Naive thymus-derived CD4-positive, alpha-beta T cell (primary cell): ENCODE measurements at regions of chr17 and their contacts with region 1.

Region 1: GRCh38 chr17:81911277-81911961 is at the start of gene PCYT2:
- DNase-seq: peak; percentile 84 to 95 (median 92)
- ATAC-seq: peak; percentile 97
- H3K4me3 ChIP-seq: peak within 1 kb of the TSS; percentile 70
- H3K4me3 Mint-ChIP-seq: peak within 1 kb of the TSS; percentile 72 to 92 (median 86)
- H3K27ac ChIP-seq: peak within 1 kb of the TSS; percentile 68
- H3K27ac Mint-ChIP-seq: peak within 1 kb of the TSS in 6 of 9 donors; percentile 33 to 85 (median 54)
- H3K4me1 ChIP-seq: peaks cover 8 to 12% of the 10 kb centered on the region in 2 donors
- H3K4me1 Mint-ChIP-seq: peaks cover 6 to 33% (median 16%) of the 10 kb centered on the region in 7 donors
- H3K27me3 ChIP-seq: no peaks in the 10 kb centered on the region
- H3K27me3 Mint-ChIP-seq: no peaks in the 10 kb centered on the region
- total RNA-seq, gene PCYT2: 17.5 to 43.6 (median 35.2) TPM

Region 2: DNA sequence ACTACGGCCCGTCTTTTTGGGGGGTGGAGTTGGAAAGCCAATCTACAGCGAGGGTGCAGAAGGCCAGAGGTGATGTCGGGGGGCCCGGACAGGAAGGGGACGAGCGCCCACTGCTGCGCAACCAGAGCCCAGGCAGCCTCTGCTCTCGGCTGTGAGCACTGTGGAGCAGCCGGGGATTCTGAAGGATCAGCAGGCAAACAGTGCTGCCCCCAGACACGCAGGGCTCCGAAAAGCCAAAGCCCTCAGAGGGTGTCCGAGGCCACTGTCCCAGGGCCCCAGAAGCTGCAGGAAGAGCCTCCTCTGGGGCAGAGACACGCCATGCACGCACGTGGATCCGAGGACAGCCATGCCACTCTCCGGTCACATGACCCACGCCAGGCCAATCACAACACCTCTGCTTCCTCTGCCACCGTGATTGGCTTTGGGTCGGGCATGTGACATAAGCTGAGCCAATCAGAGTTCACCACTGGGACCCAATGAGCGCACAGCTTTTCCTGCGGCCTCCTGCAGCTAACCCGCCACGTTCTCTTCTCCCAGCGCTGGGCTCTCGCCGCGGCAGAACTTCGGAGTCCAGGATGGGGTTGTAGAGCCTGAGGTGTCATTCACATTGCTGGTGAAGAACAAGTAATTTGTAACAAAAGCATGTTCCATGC is 439.5 kb before region 1 on chr17:
- CTCF ChIA-PET with region 1: no interaction called
- POLR2A ChIA-PET with region 1: no interaction called
- intact Hi-C with region 1: no loop called
- DNase-seq: peak in 2 of 9 donors; percentile 31 to 42
- ATAC-seq: no peak
- H3K4me3 ChIP-seq: no peak overlapping the region
- H3K4me3 Mint-ChIP-seq: no peak overlapping the region
- H3K27ac ChIP-seq: no peak overlapping the region
- H3K27ac Mint-ChIP-seq: no peak overlapping the region
- H3K4me1 ChIP-seq: no peaks in the 10 kb centered on the region
- H3K4me1 Mint-ChIP-seq: no peaks in the 10 kb centered on the region
- H3K27me3 ChIP-seq: no peaks in the 10 kb centered on the region
- H3K27me3 Mint-ChIP-seq: no peaks in the 10 kb centered on the region

Region 3: GRCh38 chr17:81852237-81852636 is 59.2 kb before region 1 on chr17:
- CTCF ChIA-PET with region 1: no interaction called
- POLR2A ChIA-PET with region 1: no interaction called
- intact Hi-C with region 1: no loop called
- DNase-seq: no peak
- ATAC-seq: no peak
- H3K4me3 ChIP-seq: no peak overlapping the region
- H3K4me3 Mint-ChIP-seq: no peak overlapping the region
- H3K27ac ChIP-seq: no peak overlapping the region
- H3K27ac Mint-ChIP-seq: peak overlapping the region in 1 of 9 donors; percentile 72
- H3K4me1 ChIP-seq: no peaks in the 10 kb centered on the region
- H3K4me1 Mint-ChIP-seq: peaks cover 0 to 13% (median 4%) of the 10 kb centered on the region in 7 donors
- H3K27me3 ChIP-seq: no peaks in the 10 kb centered on the region
- H3K27me3 Mint-ChIP-seq: no peaks in the 10 kb centered on the region

Region 4: GRCh38 chr17:81871387-81872230 is 39.8 kb before region 1 on chr17:
- CTCF ChIA-PET with region 1: no interaction called
- POLR2A ChIA-PET with region 1: interaction called, 7 read pairs
- intact Hi-C with region 1: loop called in 1 of 2 experiments (anchors 1 kb)
- DNase-seq: peak; percentile 93 to 99 (median 97)
- ATAC-seq: peak; percentile 45
- H3K4me3 ChIP-seq: peak overlapping the region; percentile 93
- H3K4me3 Mint-ChIP-seq: peak overlapping the region; percentile 82 to 91 (median 86)
- H3K27ac ChIP-seq: peak overlapping the region; percentile 98
- H3K27ac Mint-ChIP-seq: peak overlapping the region; percentile 88 to 97 (median 95)
- H3K4me1 ChIP-seq: peaks cover 25 to 28% of the 10 kb centered on the region in 2 donors
- H3K4me1 Mint-ChIP-seq: peaks cover 11 to 43% (median 41%) of the 10 kb centered on the region in 7 donors
- H3K27me3 ChIP-seq: no peaks in the 10 kb centered on the region
- H3K27me3 Mint-ChIP-seq: no peaks in the 10 kb centered on the region

Region 5: DNA sequence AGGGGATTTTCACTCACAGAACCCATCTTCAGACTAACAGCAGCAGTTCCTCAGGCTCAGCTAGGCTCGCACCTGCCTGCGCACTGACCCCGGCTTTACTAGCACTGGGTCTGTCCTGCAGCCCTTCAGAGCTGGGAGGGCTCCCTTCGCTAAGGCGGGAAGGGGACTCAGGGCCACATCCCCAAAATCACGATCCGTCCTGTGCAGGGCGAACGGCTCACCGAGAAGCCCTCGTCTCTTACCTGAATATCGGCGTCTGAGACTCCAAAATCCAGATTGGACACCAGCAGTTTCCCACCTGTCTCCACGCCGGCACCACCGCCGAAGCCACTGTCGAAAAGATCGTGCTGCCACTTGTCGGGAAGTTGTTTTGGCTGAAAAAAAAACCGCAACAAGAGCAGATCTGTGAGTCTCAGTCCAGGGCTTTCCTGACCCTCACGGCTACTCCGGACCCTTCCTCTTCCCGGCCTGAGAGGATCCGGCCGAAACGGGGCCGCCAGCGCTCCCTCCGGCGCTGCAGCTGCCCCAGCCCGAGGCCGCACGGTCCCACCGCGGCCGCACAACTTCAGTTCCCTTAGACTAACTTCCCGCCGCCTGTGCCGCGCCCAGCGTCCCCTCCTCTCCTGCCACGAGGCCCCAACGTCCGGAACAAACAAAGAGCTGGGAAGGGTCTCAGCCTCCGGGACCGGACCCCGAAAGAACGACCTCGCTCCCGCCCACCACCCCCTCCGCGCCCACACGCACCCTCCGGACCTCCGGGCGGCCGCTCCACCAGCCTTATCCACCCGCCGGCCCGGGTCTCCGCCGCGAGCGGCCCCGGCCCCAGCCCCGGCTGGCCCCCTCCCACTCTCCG is 20.7 kb before region 1 on chr17:
- CTCF ChIA-PET with region 1: no interaction called
- POLR2A ChIA-PET with region 1: interaction called, 3 read pairs
- intact Hi-C with region 1: loop called (anchors 1 kb)
- DNase-seq: peak in 1 of 9 donors; percentile 47
- ATAC-seq: no peak
- H3K4me3 ChIP-seq: peak overlapping the region; percentile 79
- H3K4me3 Mint-ChIP-seq: peak overlapping the region; percentile 78 to 96 (median 87)
- H3K27ac ChIP-seq: peak overlapping the region; percentile 82
- H3K27ac Mint-ChIP-seq: peak overlapping the region; percentile 84 to 97 (median 95)
- H3K4me1 ChIP-seq: peaks cover 16 to 20% of the 10 kb centered on the region in 2 donors
- H3K4me1 Mint-ChIP-seq: peaks cover 0 to 32% (median 19%) of the 10 kb centered on the region in 7 donors
- H3K27me3 ChIP-seq: no peaks in the 10 kb centered on the region
- H3K27me3 Mint-ChIP-seq: no peaks in the 10 kb centered on the region

Region 6: DNA sequence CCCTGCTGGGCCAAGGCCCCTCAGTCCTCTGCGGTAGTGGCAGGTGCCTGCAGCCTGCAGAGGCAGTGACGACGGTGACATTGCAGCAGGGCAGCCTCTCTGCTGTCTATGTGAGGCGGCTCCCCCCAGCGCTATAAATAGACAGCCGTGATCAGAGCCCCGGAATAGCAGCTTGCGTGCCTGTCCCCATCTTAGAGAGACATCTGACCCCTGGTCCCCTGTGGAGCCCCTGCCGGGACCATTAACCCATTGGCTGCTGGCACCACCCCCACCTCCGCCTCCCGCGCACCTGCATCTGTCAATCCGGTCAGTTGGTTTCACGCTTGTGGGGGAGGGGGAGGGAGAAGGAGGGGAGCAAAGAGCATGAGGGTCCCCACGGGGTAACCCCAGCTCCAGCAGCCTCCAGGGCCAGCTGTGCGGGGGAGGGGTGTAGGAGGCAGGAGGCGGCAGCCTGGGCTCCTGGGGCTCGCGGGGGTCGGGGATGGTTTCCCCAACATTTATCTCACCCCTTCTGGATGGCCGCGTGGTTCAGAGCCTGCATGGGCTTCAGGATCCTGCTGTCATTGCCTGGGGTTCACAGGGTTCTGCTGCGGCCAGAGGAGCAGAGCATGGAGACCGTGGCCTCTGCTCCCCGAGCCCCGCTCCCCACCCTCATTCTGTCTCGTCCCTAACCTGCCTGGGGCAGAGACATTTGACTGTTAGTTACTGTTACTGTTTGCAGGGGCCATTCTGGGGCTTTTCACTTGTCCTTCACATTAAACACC is 30.6 kb after region 1 on chr17:
- CTCF ChIA-PET with region 1: no interaction called
- POLR2A ChIA-PET with region 1: no interaction called
- intact Hi-C with region 1: loop called in 1 of 2 experiments (anchors 1 kb)
- DNase-seq: no peak
- ATAC-seq: no peak
- H3K4me3 ChIP-seq: no peak overlapping the region
- H3K4me3 Mint-ChIP-seq: no peak overlapping the region
- H3K27ac ChIP-seq: no peak overlapping the region
- H3K27ac Mint-ChIP-seq: no peak overlapping the region
- H3K4me1 ChIP-seq: no peaks in the 10 kb centered on the region
- H3K4me1 Mint-ChIP-seq: peaks cover 0 to 10% (median 6%) of the 10 kb centered on the region in 7 donors
- H3K27me3 ChIP-seq: no peaks in the 10 kb centered on the region
- H3K27me3 Mint-ChIP-seq: peaks cover 0 to 6% (median 0%) of the 10 kb centered on the region in 5 donors

Region 7: GRCh38 chr17:82244413-82245140 is 333.2 kb after region 1 on chr17:
- CTCF ChIA-PET with region 1: no interaction called
- POLR2A ChIA-PET with region 1: no interaction called
- intact Hi-C with region 1: no loop called
- DNase-seq: peak in 2 of 9 donors; percentile 21 to 38
- ATAC-seq: no peak
- H3K4me3 ChIP-seq: no peak overlapping the region
- H3K4me3 Mint-ChIP-seq: no peak overlapping the region
- H3K27ac ChIP-seq: no peak overlapping the region
- H3K27ac Mint-ChIP-seq: peak overlapping the region in 8 of 9 donors; percentile 42 to 84 (median 72)
- H3K4me1 ChIP-seq: peaks cover 3 to 25% of the 10 kb centered on the region in 2 donors
- H3K4me1 Mint-ChIP-seq: peaks cover 14 to 60% (median 36%) of the 10 kb centered on the region in 7 donors
- H3K27me3 ChIP-seq: no peaks in the 10 kb centered on the region
- H3K27me3 Mint-ChIP-seq: no peaks in the 10 kb centered on the region